ENCODE measurements at regions of chr6 and their contacts with region 1.

Region 1: GRCh38 chr6:85460921-85461797 is 11.3 kb downstream of the NT5E start:
- DNase-seq: no peak
- ATAC-seq: no peak
- H3K4me3 ChIP-seq: no peak overlapping the region
- H3K27ac ChIP-seq: peak overlapping the region; percentile 79
- H3K4me1 ChIP-seq: peaks cover 95% of the 10 kb centered on the region
- H3K27me3 ChIP-seq: no peaks in the 10 kb centered on the region
- CTCF ChIP-seq: no peak

Region 2: DNA sequence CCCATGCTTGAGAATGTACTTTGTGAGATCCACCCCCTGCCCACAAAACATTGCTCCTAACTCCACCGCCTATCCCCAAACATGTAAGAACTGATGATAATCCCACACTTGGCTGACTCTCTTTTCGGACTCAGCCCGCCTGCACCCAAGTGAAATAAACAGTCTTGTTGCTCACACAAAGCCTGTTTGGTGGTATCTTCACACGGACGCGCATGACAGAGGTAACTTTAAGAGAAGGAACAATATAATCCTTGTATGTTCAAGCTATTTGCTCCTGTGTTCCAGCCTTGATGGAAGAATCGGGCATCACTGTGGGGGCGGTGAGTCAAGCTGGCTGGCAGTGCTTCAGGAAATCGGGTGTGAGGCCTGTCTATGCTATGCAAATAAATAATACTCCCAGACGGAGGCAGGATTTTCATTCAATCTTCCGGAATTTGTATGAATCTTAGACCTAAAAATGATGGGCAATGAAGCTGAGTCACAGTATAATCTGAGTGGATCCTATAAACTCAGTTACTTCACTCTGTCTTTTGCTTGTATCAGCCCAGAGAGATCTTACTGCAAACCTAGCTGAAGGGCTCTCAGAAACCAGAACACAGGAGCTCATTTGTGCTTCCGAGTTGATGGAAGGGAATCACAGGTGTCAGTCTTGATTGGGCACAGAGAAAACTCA is 56.5 kb before region 1 on chr6:
- CTCF ChIA-PET with region 1: no interaction called
- POLR2A ChIA-PET with region 1: no interaction called
- in situ Hi-C with region 1: no loop called
- intact Hi-C with region 1: loop called (anchors 10 kb)
- DNase-seq: peak; percentile 79
- ATAC-seq: peak; percentile 82
- H3K4me3 ChIP-seq: peak overlapping the region in 1 of 2 experiments; percentile 35; a peak in 2 of 4 replicates
- H3K27ac ChIP-seq: peak overlapping the region; percentile 74
- H3K4me1 ChIP-seq: peaks cover 20% of the 10 kb centered on the region
- H3K27me3 ChIP-seq: no peaks in the 10 kb centered on the region
- CTCF ChIP-seq: no peak

Measured in Panc1 (cell line).